Endothelial cell of umbilical vein (primary cell): ENCODE measurements at regions of chr2 and their contacts with region 1.

Region 1: DNA sequence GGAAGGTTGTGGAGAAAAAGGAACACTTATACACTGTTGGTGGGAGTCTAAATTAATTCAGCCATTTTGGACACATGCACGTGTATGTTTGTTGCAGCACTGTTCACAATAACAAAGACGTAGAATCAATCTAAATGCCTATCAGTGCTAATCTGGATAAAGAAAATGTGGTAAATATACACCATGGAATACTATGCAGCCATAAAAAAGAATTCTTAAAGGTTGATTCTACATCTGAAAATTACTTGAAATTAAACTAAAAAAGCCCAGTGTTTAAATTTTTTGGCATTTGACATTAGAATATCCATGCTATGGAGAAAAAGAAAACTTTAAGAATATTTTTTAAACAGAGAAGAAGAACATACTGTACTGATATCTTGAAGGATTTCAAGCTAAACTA is 84.0 kb downstream of the BMPR2 start:
- DNase-seq: no peak
- H3K4me3 ChIP-seq: no peak overlapping the region
- H3K27ac ChIP-seq: no peak overlapping the region
- H3K4me1 ChIP-seq: no peaks in the 10 kb centered on the region
- H3K27me3 ChIP-seq: no peaks in the 10 kb centered on the region
- CTCF ChIP-seq: no peak
- POLR2A ChIP-seq: no peak

Region 2: DNA sequence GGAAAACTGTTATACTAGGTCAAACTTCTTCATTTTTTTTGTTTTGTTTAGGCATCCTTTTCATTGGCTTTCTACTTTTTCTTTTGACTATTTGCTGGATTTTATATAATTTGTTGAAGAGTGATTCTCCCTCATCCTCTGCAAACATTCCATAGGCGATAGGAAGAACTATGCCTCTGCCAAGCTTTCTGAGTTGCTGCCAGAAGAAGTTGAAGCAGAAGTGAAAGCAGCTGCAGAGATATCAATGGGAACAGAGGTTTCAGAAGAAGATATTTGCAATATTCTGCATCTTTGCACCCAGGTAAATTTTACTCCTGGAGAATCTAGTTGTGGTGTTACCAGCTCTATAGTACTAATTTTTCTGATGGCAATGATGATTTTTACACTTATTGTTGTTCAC is 169.1 kb before region 1 on chr2:
- CTCF ChIA-PET with region 1: no interaction called
- POLR2A ChIA-PET with region 1: no interaction called
- dilution Hi-C with region 1: no loop called
- intact Hi-C with region 1: loop called (anchors 5 kb)
- DNase-seq: no peak
- H3K4me3 ChIP-seq: no peak overlapping the region
- H3K27ac ChIP-seq: no peak overlapping the region
- H3K4me1 ChIP-seq: peaks cover 23% of the 10 kb centered on the region
- H3K27me3 ChIP-seq: no peaks in the 10 kb centered on the region
- CTCF ChIP-seq: no peak
- POLR2A ChIP-seq: no peak